Heart left ventricle (tissue), 16 donors: ENCODE measurements at regions of chr13 and their contacts with region 1.

Region 1: DNA sequence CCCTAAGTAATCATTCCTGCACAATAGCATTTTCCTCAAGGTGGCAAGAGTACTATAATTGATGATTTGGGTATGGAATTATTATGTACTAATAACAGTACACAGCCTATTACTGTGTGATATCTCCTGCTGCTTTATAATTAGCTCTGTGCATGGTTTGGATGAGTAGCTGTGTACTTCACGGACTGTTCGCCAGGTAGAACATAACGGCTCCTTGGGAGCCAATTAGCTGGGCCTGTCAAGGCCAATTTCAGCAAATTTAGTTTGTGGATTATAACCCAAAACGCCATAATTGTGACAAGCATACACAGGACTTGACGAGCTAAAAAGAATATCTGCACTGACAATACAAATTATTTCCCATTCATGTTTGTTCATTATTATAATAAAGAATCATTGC is 1584.2 kb downstream of the SLITRK1 start:
- DNase-seq: no peak
- ATAC-seq: no peak
- H3K4me3 ChIP-seq: no peak overlapping the region
- H3K27ac ChIP-seq: no peak overlapping the region
- H3K4me1 ChIP-seq: no peaks in the 10 kb centered on the region
- H3K27me3 ChIP-seq: no peaks in the 10 kb centered on the region
- CTCF ChIP-seq: no peak
- POLR2A ChIP-seq: no peak

Region 2: GRCh38 chr13:82010780-82011179 is 287.3 kb before region 1 on chr13:
- intact Hi-C with region 1: loop called in 1 of 10 experiments (anchors 5 kb)
- DNase-seq: no peak
- ATAC-seq: no peak
- H3K4me3 ChIP-seq: no peak overlapping the region
- H3K27ac ChIP-seq: no peak overlapping the region
- H3K4me1 ChIP-seq: no peaks in the 10 kb centered on the region
- H3K27me3 ChIP-seq: no peaks in the 10 kb centered on the region
- CTCF ChIP-seq: no peak
- POLR2A ChIP-seq: no peak

Region 3: DNA sequence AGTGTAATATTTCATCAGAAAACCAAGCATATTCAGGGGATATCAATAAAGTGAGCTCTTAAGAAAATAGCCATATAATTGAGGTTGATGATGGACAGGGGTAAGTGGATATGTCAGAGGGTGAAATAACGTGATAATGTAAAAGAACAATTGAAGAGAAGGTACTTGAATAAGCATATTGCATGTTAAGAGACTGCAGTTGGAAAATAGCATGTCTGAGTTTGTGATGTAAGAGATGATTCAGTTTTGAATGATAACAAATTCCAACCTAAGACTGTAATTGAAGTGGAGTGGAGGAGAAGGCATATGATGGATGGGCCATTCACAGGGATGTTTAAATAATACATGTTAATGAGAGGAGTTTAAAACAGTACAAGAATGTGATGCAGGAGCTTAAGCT is 49.3 kb before region 1 on chr13:
- intact Hi-C with region 1: no loop called
- DNase-seq: no peak
- ATAC-seq: no peak
- H3K4me3 ChIP-seq: no peak overlapping the region
- H3K27ac ChIP-seq: no peak overlapping the region
- H3K4me1 ChIP-seq: no peaks in the 10 kb centered on the region
- H3K27me3 ChIP-seq: no peaks in the 10 kb centered on the region
- CTCF ChIP-seq: no peak
- POLR2A ChIP-seq: no peak